AG04449 (cell line): ENCODE measurements at regions of chr1 and their contacts with region 1.

Region 1: GRCh38 chr1:110495926-110496600 is 22.9 kb downstream of the KCNA10 start:
- DNase-seq: peak; percentile 28
- H3K4me3 ChIP-seq: no peak overlapping the region
- CTCF ChIP-seq: peak; percentile 78

Region 2: DNA sequence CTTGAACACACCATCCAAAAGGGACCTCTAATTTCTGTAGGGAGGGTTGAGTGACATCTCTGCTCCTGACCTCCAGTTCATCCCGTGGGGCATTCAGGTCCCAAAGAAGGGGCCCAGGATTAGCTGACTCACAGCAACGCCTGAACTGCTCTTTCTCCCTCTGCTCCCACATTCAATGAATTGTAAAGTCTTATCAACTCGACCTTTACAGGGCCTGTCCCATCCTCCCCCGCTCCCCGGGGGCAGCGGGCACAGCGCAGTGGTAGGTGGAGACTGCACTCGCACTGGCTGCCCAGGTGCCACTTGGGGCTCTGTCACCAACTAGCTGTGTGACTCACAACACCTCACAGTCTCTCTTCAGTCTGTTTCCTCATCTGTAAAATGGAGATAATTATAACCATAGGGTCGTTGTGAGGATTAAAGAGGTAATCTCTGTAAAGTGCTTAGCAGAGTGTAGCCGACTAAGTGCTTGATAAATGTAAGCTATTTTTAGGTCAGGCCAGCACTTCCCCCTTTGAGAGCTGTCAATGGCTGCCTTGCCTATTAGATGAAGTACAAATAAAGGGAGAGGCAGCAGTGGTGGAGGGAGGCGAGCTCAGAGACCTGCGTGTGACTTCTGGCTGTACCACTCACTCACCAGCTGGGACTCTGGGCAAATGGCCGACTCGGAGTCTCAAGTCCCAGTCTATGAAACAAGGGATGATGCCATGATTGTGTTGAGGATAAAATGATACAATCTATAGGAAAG is 1188.6 kb before region 1 on chr1:
- CTCF ChIA-PET with region 1: no interaction called
- POLR2A ChIA-PET with region 1: no interaction called
- DNase-seq: no peak
- H3K4me3 ChIP-seq: no peak overlapping the region
- CTCF ChIP-seq: no peak

Region 3: DNA sequence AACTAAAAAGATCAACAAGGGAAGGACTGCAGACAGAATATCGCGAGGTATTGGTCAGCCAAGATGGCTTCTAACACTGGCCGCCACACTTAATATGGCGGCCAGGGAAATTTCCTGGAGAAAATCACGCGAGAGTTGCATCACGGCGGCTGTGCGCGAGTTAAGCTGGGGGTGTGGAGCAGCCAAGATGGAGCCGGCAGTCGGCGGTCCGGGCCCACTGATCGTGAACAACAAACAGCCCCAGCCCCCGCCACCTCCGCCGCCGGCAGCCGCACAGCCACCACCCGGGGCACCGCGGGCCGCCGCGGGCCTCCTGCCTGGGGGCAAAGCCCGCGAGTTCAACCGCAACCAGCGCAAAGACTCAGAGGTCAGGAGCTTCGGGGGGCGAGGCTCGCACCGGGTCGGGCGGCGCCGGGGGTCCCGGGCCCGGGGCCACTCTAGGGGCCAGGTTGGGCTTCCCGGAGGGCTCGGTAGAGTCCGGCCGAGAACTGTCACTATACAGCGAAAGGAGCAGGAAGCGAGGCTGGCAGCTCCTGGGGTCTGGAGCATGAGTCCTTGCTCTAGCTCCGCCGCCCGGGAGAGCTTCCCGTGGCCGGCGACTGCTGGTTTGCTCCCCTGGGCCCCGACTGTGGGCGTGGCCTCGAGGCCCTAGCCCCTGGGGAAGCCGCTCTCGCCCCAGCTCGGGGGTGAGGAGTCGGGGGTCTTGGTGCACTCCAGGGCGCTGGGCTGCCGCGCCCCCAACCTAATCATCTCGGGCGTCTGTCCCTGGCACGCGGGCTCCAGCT is 461.4 kb before region 1 on chr1 and contains the start of gene STRIP1:
- CTCF ChIA-PET with region 1: interaction called, 43 read pairs
- POLR2A ChIA-PET with region 1: no interaction called
- DNase-seq: peak; percentile 78
- H3K4me3 ChIP-seq: peak within 1 kb of the TSS; percentile 84
- CTCF ChIP-seq: no peak

Region 4: GRCh38 chr1:110196917-110197765 is 298.9 kb before region 1 on chr1:
- CTCF ChIA-PET with region 1: interaction called, 281 read pairs
- POLR2A ChIA-PET with region 1: no interaction called
- DNase-seq: no peak
- H3K4me3 ChIP-seq: no peak overlapping the region
- CTCF ChIP-seq: peak; percentile 92

Region 5: GRCh38 chr1:110338886-110339406 is 157.1 kb before region 1 on chr1 and contains the start of gene RBM15:
- CTCF ChIA-PET with region 1: interaction called, 14 read pairs
- POLR2A ChIA-PET with region 1: no interaction called
- DNase-seq: peak; percentile 100
- H3K4me3 ChIP-seq: peak within 1 kb of the TSS; percentile 98
- CTCF ChIP-seq: no peak

Region 6: DNA sequence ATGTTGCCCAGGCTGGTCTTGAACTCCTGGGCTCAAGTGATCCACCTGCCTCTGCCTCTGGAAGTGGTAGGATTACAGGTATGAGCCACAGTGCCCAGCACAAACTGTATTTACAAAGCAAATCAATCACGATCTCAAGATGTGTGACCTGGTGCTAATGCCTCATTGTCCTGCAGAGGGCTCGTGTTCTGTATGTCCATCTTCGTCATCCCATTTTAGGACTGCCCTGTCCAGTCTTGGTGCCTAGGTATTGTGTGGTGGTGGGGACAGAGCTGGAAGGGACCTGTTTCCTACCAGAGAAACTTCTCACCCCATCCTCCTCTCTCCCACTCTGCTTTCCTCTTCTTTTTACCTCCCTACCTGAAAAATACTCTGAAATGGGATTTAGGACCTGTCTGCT is 24.9 kb before region 1 on chr1:
- CTCF ChIA-PET with region 1: interaction called, 119 read pairs
- POLR2A ChIA-PET with region 1: no interaction called
- DNase-seq: no peak
- H3K4me3 ChIP-seq: no peak overlapping the region
- CTCF ChIP-seq: no peak

Region 7: DNA sequence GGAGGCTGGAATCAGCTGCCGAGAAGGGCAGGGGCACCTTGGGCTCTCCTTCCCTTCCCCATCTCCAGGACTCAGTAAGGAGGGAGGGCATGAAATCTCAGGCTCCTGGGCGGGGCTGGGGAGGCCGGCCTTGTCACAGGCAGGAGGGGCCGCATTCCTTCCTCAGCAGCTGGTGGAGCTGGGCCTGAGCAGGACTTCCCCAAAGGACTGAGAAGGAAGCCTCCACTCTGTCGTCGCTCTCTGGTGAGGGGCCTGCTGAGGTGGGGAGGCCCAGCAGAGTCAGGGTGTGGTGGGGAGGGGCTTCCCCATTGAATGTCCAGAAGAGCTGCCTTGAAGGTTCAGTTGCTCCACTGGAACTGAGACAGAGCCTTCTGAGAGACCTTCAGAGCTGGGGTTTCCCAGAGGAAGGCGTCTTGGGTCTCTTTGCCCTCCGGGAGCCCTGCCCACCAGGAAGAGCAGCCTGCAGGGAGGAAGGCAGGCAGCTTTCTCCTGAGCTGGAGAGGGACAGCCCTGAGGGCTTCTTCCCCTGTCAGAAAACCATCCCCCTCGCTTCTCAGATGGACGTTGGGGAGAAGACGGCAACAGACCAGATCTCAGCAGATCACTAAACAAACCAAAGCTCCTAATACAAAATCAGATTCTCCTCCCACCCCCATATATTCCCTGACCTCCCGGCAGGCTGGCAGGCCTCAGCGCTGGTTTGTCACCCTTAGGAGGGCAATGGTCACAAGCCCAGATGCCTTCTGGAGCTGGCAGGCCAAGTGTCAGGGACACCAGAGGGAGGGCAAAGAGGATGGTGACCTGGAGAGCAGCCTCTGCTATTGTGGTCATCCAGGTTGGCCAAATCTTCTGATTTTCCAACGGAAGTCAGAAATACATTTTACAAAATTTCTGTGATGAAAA is 12.2 kb after region 1 on chr1:
- CTCF ChIA-PET with region 1: interaction called, 51 read pairs
- POLR2A ChIA-PET with region 1: no interaction called
- DNase-seq: no peak
- H3K4me3 ChIP-seq: no peak overlapping the region
- CTCF ChIP-seq: no peak

Region 8: DNA sequence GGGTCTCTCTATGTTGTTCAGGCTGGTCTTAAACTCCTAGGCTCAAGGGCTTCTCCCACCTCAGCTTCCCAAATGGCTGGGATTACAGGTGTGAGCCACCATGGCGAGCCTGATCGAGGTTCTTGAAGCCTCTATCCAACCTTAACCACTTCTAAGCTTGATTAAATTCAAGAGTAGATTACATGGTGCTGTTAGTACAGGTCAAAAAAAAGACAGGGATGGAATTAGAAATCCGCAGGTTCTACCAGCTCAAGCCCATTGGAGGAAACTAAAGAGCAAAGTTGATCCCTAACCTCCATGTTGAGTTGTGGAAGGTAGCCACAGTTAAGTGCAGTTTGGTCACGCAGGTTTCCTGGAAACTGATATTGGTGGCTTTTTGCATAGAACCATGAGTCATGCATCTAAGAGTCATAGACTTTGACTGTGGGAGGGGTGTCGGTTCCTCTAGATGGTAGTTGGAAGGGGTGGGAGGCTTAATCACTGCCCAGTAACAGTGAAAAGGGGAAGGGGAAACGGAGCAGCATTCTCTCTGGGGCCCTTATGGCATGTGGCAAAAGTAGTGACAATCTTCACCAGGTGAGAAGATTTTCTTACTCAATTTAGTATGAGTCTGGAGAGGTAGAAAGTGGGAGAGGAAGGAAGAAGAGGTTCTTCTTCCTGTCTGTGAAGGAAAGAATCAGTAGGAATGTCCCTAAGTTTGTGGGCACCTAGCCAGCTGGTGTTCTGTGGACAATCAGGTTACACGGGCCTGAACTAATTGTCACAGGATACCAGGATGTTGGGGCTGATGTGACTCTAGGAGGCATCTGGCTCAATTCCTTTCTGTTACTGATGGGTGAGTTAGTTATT is 383.9 kb after region 1 on chr1:
- CTCF ChIA-PET with region 1: no interaction called
- POLR2A ChIA-PET with region 1: no interaction called
- DNase-seq: no peak
- H3K4me3 ChIP-seq: no peak overlapping the region
- CTCF ChIP-seq: no peak